ENCODE measurements at regions of chr14 and their contacts with region 1.

Region 1: GRCh38 chr14:61147831-61148549 is 133.1 kb downstream of the TMEM30B start:
- DNase-seq: peak in 1 of 2 donors; percentile 80
- ATAC-seq: no peak
- H3K4me3 ChIP-seq: no peak overlapping the region
- H3K27ac ChIP-seq: peak overlapping the region in 1 of 2 donors; percentile 64
- H3K4me1 ChIP-seq: peaks cover 0 to 2% of the 10 kb centered on the region in 2 donors
- H3K27me3 ChIP-seq: no peaks in the 10 kb centered on the region

Region 2: GRCh38 chr14:60905923-60906322 is 242.1 kb before region 1 on chr14:
- intact Hi-C with region 1: no loop called
- DNase-seq: no peak
- ATAC-seq: no peak
- H3K4me3 ChIP-seq: no peak overlapping the region
- H3K27ac ChIP-seq: no peak overlapping the region
- H3K4me1 ChIP-seq: peaks cover 1 to 2% of the 10 kb centered on the region in 2 donors
- H3K27me3 ChIP-seq: no peaks in the 10 kb centered on the region

Region 3: GRCh38 chr14:61064210-61064609 is 83.8 kb before region 1 on chr14:
- intact Hi-C with region 1: no loop called
- DNase-seq: no peak
- ATAC-seq: no peak
- H3K4me3 ChIP-seq: no peak overlapping the region
- H3K27ac ChIP-seq: no peak overlapping the region
- H3K4me1 ChIP-seq: no peaks in the 10 kb centered on the region
- H3K27me3 ChIP-seq: no peaks in the 10 kb centered on the region

Region 4: GRCh38 chr14:61090432-61091216 is 57.4 kb before region 1 on chr14:
- intact Hi-C with region 1: no loop called
- DNase-seq: no peak
- ATAC-seq: no peak
- H3K4me3 ChIP-seq: no peak overlapping the region
- H3K27ac ChIP-seq: no peak overlapping the region
- H3K4me1 ChIP-seq: no peaks in the 10 kb centered on the region
- H3K27me3 ChIP-seq: no peaks in the 10 kb centered on the region

Region 5: DNA sequence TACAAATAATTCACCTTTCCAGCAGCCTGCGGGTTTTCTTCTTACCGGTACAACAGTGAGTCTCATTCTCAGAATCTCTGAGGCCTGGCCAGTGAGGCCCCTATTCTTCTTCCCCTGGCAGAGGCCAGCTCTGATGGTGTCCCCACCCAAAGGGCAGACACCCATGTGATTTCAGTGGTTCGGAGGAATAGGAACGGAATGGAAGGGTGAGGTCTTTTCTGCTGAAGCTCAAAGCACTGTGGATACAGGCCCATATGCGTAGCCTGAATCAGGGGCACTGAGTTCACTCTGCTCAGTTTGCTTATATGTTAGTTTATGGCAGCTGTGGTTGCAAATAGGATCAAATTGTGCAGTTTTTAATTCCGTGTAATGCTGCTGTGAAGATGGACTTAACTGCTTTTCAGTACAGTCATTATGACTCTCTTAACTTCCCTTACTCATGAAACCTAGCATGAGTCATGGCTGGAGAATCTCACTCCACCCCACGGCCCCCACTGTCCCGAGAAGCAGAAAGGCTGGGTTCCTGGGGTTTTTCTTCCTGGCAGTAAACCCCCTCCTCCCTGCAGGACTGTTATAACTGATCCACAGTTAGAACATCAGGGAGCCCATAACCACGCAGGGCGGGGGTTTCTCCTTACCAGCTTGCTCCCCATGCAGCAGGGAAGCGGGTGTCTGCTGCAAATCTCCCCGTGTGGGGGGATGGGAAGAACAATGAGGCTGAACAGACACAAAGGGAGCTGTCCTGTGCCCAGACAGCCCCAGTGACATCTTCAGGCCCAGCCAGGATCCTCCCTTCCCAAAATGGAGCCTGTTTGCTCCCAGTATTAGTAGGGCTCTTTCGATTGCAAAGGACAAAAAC is 44.3 kb before region 1 on chr14:
- intact Hi-C with region 1: loop called (anchors 2 to 5 kb)
- DNase-seq: peak; percentile 84 to 85
- ATAC-seq: peak; percentile 83
- H3K4me3 ChIP-seq: no peak overlapping the region
- H3K27ac ChIP-seq: peak overlapping the region; percentile 47 to 69
- H3K4me1 ChIP-seq: peaks cover 0 to 3% of the 10 kb centered on the region in 2 donors
- H3K27me3 ChIP-seq: no peaks in the 10 kb centered on the region

Region 6: DNA sequence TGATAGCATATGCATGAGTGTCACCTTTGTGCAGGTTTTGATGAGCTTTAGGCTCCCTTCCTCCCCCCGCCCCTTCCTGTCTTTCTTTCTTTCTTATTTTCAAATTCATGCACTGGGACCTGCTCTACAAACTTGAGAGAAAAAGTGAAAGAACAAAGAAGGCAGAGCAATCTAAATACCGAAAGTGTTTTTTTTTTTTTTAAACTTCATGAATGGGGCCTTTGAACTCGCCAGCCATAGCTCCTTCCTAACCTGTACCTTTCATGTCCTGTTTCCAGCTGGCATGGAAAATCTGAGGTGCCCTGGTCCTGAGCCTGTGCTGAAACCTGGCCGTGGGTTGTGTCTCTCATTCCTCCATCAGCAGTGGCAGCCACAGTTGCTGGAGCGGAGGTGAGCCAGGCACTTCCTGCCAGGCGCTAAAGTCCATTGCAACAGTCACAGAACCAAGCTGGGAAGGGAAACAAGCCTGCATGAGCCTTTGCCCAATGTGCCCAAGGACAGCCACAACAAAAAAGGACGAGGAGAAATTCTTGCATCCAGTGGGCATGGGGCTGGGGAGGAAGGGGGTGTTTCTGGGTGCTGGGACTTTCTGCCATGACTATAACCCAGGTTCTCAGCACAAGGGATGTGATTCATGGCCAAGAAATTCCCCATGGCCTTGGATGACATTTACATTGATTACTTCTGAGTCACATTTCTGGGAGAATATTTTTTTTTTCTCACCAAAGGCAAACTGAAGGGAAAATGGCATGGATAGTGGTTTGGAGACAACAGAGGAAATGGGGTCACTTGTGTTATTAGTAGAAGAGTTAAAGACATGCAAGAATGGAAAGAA is 30.5 kb after region 1 on chr14:
- intact Hi-C with region 1: loop called in 1 of 2 experiments (anchors 2 kb)
- DNase-seq: peak in 1 of 2 donors; percentile 71
- ATAC-seq: peak; percentile 59
- H3K4me3 ChIP-seq: no peak overlapping the region
- H3K27ac ChIP-seq: peak overlapping the region in 1 of 2 donors; percentile 12
- H3K4me1 ChIP-seq: no peaks in the 10 kb centered on the region
- H3K27me3 ChIP-seq: no peaks in the 10 kb centered on the region

Region 7: GRCh38 chr14:61188978-61189808 is 41.2 kb after region 1 on chr14:
- intact Hi-C with region 1: loop called in 1 of 2 experiments (anchors 5 kb)
- DNase-seq: peak; percentile 80 to 88
- ATAC-seq: peak; percentile 90
- H3K4me3 ChIP-seq: peak overlapping the region; percentile 29 to 30
- H3K27ac ChIP-seq: peak overlapping the region in 1 of 2 donors; percentile 4
- H3K4me1 ChIP-seq: no peaks in the 10 kb centered on the region
- H3K27me3 ChIP-seq: no peaks in the 10 kb centered on the region

Measured in aorta (tissue), 5 donors.